ENCODE measurements at regions of chr12 and their contacts with region 1.

Region 1: GRCh38 chr12:47779301-47779942 is 6.4 kb downstream of the SLC48A1 start:
- DNase-seq: peak; percentile 96
- ATAC-seq: peak; percentile 82
- H3K4me3 Mint-ChIP-seq: no peak overlapping the region
- H3K27ac Mint-ChIP-seq: peak overlapping the region; percentile 37
- H3K4me1 Mint-ChIP-seq: peaks cover 29% of the 10 kb centered on the region
- H3K27me3 Mint-ChIP-seq: no peaks in the 10 kb centered on the region

Region 2: DNA sequence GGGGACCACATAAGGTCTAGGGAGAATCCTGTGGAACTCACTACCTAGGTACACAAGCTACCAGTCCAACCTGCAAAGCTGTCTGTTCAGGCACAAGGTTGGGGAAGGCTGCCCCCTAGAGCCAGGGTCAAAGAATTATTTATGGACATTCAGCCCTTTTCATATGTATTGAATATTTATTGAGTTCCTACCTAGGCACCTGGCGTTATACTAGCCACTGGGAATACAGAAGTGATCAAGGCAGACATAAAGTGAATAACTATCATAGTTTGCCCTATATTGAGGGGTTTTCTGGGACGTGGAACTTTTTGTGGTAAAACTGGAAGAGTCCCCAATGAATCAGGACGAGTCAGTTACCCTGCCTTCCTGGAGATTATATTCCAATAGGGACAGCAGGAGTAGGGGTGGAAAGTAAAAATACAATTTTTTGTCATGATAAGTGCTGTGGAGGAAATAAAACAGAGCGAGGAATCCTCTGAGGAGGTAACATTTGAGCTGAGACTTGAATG is 12.2 kb before region 1 on chr12:
- CTCF ChIA-PET with region 1: interaction called, 85 read pairs
- POLR2A ChIA-PET with region 1: no interaction called
- intact Hi-C with region 1: no loop called
- DNase-seq: peak; percentile 88
- ATAC-seq: peak; percentile 89
- H3K4me3 Mint-ChIP-seq: no peak overlapping the region
- H3K27ac Mint-ChIP-seq: no peak overlapping the region
- H3K4me1 Mint-ChIP-seq: no peaks in the 10 kb centered on the region
- H3K27me3 Mint-ChIP-seq: peaks cover 4% of the 10 kb centered on the region

Region 3: DNA sequence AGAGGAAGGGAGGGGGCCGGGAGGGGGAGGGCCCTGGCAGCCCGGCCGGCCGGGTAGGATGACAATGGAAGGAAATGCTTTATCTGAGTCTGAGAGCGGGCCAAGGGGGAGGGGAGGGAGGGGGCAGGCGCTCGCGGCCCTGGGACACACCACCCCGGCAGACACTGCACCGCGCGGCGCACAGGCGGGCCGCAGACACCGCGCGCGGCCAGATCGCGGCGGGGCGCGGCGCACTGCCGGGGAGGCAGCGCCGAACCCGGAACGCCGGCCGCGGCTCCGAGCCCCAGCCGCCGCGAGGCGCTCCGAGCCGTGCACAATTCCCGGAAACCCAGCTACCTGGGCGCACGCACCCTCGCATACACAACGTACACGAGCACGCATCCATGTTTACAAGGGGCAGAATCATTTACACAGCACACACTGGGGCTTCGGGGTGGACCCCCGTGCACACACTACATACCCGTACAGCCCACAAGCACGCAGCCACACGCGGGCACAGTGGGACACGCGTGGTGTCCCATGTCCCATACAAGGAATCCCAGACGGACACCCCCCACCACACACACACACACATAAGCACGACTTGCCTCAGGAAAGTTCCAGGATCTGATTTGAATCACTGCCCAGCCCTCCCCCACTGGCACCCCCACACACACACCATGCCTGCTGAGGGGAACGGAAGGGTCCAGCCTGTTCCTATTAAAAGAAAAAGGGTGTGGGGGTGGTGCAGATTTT is 40.6 kb after region 1 on chr12 and contains the start of gene HDAC7:
- CTCF ChIA-PET with region 1: interaction called, 10 read pairs
- POLR2A ChIA-PET with region 1: interaction called, 5 read pairs
- intact Hi-C with region 1: no loop called
- DNase-seq: peak; percentile 90
- ATAC-seq: peak; percentile 48
- H3K4me3 Mint-ChIP-seq: peak within 1 kb of the TSS; percentile 94
- H3K27ac Mint-ChIP-seq: peak within 1 kb of the TSS; percentile 99
- H3K4me1 Mint-ChIP-seq: peaks cover 68% of the 10 kb centered on the region
- H3K27me3 Mint-ChIP-seq: no peaks in the 10 kb centered on the region
- total RNA-seq, gene HDAC7: 331 to 385 TPM

Region 4: GRCh38 chr12:47828608-47829536 is 49.5 kb after region 1 on chr12:
- CTCF ChIA-PET with region 1: interaction called, 26 read pairs
- POLR2A ChIA-PET with region 1: interaction called, 3 read pairs
- intact Hi-C with region 1: no loop called
- DNase-seq: peak; percentile 55
- ATAC-seq: no peak
- H3K4me3 Mint-ChIP-seq: peak overlapping the region; percentile 71
- H3K27ac Mint-ChIP-seq: peak overlapping the region; percentile 92
- H3K4me1 Mint-ChIP-seq: peaks cover 91% of the 10 kb centered on the region
- H3K27me3 Mint-ChIP-seq: no peaks in the 10 kb centered on the region

Measured in activated CD4-positive, alpha-beta T cell treated with anti-CD3 and anti-CD28 coated beads for 36 hours (primary cell).